H1 (cell line): ENCODE measurements at regions of chr4 and their contacts with region 1.

Region 1: GRCh38 chr4:67332627-67333026 is 212.7 kb downstream of the CENPC start:
- DNase-seq: no peak
- H3K4me3 ChIP-seq: no peak overlapping the region
- H3K27ac ChIP-seq: no peak overlapping the region
- H3K4me1 ChIP-seq: no peaks in the 10 kb centered on the region
- H3K27me3 ChIP-seq: no peaks in the 10 kb centered on the region
- CTCF ChIP-seq: peak; percentile 15 to 68 (median 24); a peak in 3 of 4 replicates
- EP300 ChIP-seq: no peak
- POLR2A ChIP-seq: no peak
- RAD21 ChIP-seq: peak; percentile 24; a peak in 3 of 4 replicates

Region 2: GRCh38 chr4:67320645-67321044 is 12.0 kb before region 1 on chr4:
- CTCF ChIA-PET with region 1: interaction called, 24 read pairs
- POLR2A ChIA-PET with region 1: no interaction called
- DNase-seq: no peak
- H3K4me3 ChIP-seq: no peak overlapping the region
- H3K27ac ChIP-seq: no peak overlapping the region
- H3K4me1 ChIP-seq: no peaks in the 10 kb centered on the region
- H3K27me3 ChIP-seq: no peaks in the 10 kb centered on the region
- CTCF ChIP-seq: no peak
- EP300 ChIP-seq: no peak
- POLR2A ChIP-seq: no peak
- RAD21 ChIP-seq: no peak

Region 3: GRCh38 chr4:67393699-67394281 is 61.2 kb after region 1 on chr4:
- CTCF ChIA-PET with region 1: interaction called, 23 read pairs
- POLR2A ChIA-PET with region 1: no interaction called
- DNase-seq: no peak
- H3K4me3 ChIP-seq: no peak overlapping the region
- H3K27ac ChIP-seq: no peak overlapping the region
- H3K4me1 ChIP-seq: peaks cover 0 to 4% (median 0%) of the 10 kb centered on the region in 4 experiments; a peak in 1 of 7 replicates
- H3K27me3 ChIP-seq: no peaks in the 10 kb centered on the region
- CTCF ChIP-seq: peak in 1 of 3 experiments; percentile 41; a peak in 2 of 4 replicates
- EP300 ChIP-seq: no peak
- POLR2A ChIP-seq: no peak
- RAD21 ChIP-seq: peak in 1 of 2 experiments; percentile 54; a peak in 3 of 4 replicates

Region 4: DNA sequence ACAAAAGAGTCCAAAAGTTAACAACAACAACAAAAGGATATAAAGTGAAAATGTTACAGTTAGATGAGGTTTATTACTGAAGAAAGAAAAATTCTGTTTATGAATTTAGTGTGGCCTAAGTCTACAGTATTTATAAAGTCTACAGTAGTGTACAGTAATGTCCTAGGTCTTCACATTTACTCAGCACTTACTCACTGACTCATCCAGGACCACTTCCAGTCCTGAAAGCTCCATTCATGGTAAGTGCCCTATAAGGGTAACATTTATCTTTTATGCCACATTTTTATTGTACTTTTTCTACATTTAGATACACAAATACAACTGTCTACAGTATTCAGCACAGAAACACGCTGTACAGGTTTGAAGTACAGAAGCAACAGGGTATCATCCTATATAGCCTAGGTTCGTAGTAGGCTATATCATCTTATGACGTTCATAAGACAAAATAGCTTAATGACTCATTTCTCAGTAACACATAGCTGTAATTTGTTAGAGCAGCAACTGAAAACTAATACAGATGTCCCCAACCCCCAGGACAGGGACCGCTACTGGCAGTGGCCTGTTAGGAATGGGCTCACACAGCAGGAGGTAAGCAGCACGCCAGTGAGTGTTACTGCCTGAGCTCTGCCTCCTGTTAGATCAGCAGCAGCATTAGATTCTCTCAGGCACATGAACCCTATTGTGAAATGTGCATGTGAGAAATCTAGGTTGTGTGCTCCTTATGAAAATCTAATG is 151.4 kb after region 1 on chr4:
- CTCF ChIA-PET with region 1: no interaction called
- POLR2A ChIA-PET with region 1: no interaction called
- DNase-seq: no peak
- H3K4me3 ChIP-seq: no peak overlapping the region
- H3K27ac ChIP-seq: no peak overlapping the region
- H3K4me1 ChIP-seq: no peaks in the 10 kb centered on the region
- H3K27me3 ChIP-seq: no peaks in the 10 kb centered on the region
- CTCF ChIP-seq: no peak
- EP300 ChIP-seq: no peak
- POLR2A ChIP-seq: no peak
- RAD21 ChIP-seq: no peak

Region 5: GRCh38 chr4:67615119-67615518 is 282.5 kb after region 1 on chr4:
- CTCF ChIA-PET with region 1: no interaction called
- POLR2A ChIA-PET with region 1: no interaction called
- DNase-seq: no peak
- H3K4me3 ChIP-seq: no peak overlapping the region
- H3K27ac ChIP-seq: no peak overlapping the region
- H3K4me1 ChIP-seq: no peaks in the 10 kb centered on the region
- H3K27me3 ChIP-seq: no peaks in the 10 kb centered on the region
- CTCF ChIP-seq: no peak
- EP300 ChIP-seq: no peak
- POLR2A ChIP-seq: no peak
- RAD21 ChIP-seq: no peak